ENCODE measurements at regions of chr1 and their contacts with region 1.

Region 1: GRCh38 chr1:234610348-234611152 is 572 bp upstream of the IRF2BP2 start:
- DNase-seq: peak; percentile 84
- ATAC-seq: peak; percentile 45
- H3K4me3 Mint-ChIP-seq: peak overlapping the region; percentile 90
- H3K27ac Mint-ChIP-seq: peak overlapping the region; percentile 95
- H3K4me1 Mint-ChIP-seq: peaks cover 56% of the 10 kb centered on the region
- H3K27me3 Mint-ChIP-seq: no peaks in the 10 kb centered on the region
- CTCF ChIP-seq: no peak

Region 2: GRCh38 chr1:234639961-234640360 is 29.4 kb after region 1 on chr1:
- CTCF ChIA-PET with region 1: no interaction called
- POLR2A ChIA-PET with region 1: no interaction called
- intact Hi-C with region 1: loop called (anchors 2 kb)
- DNase-seq: no peak
- ATAC-seq: no peak
- H3K4me3 Mint-ChIP-seq: no peak overlapping the region
- H3K27ac Mint-ChIP-seq: no peak overlapping the region
- H3K4me1 Mint-ChIP-seq: no peaks in the 10 kb centered on the region
- H3K27me3 Mint-ChIP-seq: no peaks in the 10 kb centered on the region
- CTCF ChIP-seq: no peak

Region 3: DNA sequence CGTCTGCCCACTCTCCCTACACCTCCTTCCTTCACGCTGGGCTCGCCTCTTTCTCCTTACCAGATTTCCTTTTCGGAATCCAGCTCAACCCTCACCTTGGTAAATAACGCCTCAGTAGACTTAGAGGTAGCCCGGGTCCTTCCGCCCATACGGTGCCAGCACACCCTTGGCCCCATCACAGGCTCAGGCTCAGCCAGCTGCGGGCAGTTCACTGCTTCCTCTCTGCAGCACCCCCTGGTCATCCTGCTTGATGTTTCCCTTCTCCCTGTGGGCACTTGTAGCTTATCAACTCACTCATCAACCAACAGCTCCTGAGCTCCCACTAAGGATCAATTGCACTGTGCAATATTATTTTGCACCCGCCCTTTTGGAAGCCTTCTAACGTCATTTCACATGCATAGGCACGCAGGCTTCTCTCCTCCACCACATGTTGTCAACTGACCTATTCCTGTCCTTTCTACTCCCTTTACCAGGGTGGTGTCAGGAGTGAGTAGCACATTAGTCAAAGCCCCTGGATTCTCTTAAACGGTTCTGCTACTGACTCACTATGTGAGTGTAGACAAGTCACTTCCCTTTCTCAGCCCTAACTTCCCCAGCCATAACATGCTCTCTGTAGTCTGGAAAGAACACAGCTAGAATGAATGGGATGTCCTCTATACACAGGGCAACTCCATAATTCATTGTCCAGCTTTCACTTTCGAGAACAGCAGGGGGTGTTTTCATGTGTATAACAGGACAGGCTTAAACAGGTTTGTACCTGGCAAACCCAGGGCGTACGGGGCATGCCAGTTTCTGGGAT is 46.5 kb after region 1 on chr1:
- CTCF ChIA-PET with region 1: no interaction called
- POLR2A ChIA-PET with region 1: no interaction called
- intact Hi-C with region 1: no loop called
- DNase-seq: no peak
- ATAC-seq: peak; percentile 50
- H3K4me3 Mint-ChIP-seq: no peak overlapping the region
- H3K27ac Mint-ChIP-seq: no peak overlapping the region
- H3K4me1 Mint-ChIP-seq: peaks cover 9% of the 10 kb centered on the region
- H3K27me3 Mint-ChIP-seq: no peaks in the 10 kb centered on the region
- CTCF ChIP-seq: no peak

Region 4: DNA sequence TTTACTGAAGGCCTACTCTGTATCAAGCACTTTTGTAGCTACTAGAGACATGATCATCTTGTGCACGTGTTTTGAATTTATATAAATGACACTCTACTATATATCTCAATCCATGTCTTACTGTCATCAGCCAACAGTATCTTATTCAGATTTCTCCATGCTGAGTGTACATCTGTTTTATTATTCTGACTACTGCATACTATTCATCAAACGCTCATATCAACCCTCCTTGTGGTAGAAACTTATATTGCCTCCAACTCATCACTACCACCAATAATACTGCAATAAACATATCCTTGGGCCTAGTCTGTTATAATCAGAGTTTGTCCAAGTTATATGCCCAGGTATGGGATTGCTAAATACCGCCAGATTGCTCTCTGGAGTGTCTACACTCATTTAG is 81.0 kb after region 1 on chr1:
- CTCF ChIA-PET with region 1: no interaction called
- POLR2A ChIA-PET with region 1: no interaction called
- intact Hi-C with region 1: no loop called
- DNase-seq: no peak
- ATAC-seq: no peak
- H3K4me3 Mint-ChIP-seq: no peak overlapping the region
- H3K27ac Mint-ChIP-seq: no peak overlapping the region
- H3K4me1 Mint-ChIP-seq: peaks cover 8% of the 10 kb centered on the region
- H3K27me3 Mint-ChIP-seq: no peaks in the 10 kb centered on the region
- CTCF ChIP-seq: no peak

Region 5: GRCh38 chr1:234772345-234773147 is 162.0 kb after region 1 on chr1:
- CTCF ChIA-PET with region 1: interaction called, 12 read pairs
- POLR2A ChIA-PET with region 1: interaction called, 86 read pairs
- intact Hi-C with region 1: loop called (anchors 1 kb)
- DNase-seq: peak; percentile 66
- ATAC-seq: peak; percentile 81
- H3K4me3 Mint-ChIP-seq: peak overlapping the region; percentile 77
- H3K27ac Mint-ChIP-seq: peak overlapping the region; percentile 96
- H3K4me1 Mint-ChIP-seq: peaks cover 57% of the 10 kb centered on the region
- H3K27me3 Mint-ChIP-seq: no peaks in the 10 kb centered on the region
- CTCF ChIP-seq: no peak

Region 6: DNA sequence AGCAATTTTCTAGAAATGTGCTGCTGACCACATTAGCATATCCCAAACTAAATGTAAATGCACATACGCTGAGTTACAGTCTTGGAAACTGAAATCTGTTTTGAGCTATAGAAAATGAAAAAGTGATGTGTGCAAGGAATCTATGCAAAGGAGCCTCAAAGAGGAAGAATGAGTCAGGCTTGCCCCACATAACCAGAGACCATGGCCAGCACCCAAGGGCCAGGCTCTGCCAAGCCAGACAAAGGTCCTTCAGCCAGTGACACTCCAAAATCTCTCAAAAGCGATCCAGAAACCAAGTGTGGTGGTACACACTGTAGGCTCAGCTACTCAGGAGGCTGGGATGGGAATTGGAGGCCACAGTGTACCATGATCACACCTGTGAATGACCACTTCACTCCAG is 322.9 kb after region 1 on chr1:
- CTCF ChIA-PET with region 1: interaction called, 4 read pairs
- POLR2A ChIA-PET with region 1: interaction called, 11 read pairs
- intact Hi-C with region 1: no loop called
- DNase-seq: no peak
- ATAC-seq: peak; percentile 86
- H3K4me3 Mint-ChIP-seq: peak overlapping the region; percentile 50
- H3K27ac Mint-ChIP-seq: peak overlapping the region; percentile 70
- H3K4me1 Mint-ChIP-seq: peaks cover 21% of the 10 kb centered on the region
- H3K27me3 Mint-ChIP-seq: no peaks in the 10 kb centered on the region
- CTCF ChIP-seq: no peak

Region 7: DNA sequence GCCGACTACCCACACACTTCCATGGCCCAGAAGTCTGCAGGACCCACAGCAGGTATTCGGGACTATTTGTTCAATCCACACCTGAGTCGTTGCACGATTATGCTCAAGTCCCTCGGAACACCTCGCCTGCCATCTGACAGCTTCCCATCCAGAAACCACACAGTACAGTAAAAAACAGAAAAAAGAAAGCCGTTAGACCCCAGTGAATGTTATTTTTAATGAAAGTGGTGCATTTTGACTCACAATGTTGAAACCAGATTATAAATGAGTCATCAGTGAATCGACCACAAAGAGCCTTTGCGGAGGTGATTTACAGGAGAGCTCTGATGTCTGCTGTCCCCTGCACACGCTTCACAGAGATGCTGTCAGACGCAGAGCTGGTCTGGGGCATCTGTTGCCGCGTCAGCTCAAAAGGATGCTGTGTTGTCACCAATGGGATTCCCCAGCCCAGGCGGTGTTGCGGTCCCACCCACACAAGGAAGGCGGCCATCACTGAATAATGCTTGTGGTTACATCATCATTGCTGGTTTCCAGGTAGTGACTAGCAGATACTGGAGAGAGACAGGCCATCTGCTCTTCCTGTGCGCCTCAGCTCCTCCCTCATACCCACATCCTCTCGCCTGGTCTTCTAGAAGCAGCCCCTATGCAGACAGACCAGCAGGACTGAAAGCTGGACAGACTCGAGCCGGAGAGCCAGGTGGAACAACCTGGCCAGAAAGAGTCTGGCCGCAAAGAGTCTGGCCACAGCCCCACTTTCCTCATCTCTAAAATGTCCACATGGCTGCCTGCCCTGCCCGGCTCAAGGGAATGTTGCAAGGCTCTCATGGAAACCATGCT is 401.3 kb after region 1 on chr1:
- CTCF ChIA-PET with region 1: interaction called, 3 read pairs
- POLR2A ChIA-PET with region 1: interaction called, 142 read pairs
- intact Hi-C with region 1: loop called (anchors 1 kb)
- DNase-seq: peak; percentile 79
- ATAC-seq: peak; percentile 77
- H3K4me3 Mint-ChIP-seq: peak overlapping the region; percentile 47
- H3K27ac Mint-ChIP-seq: peak overlapping the region; percentile 99
- H3K4me1 Mint-ChIP-seq: peaks cover 94% of the 10 kb centered on the region
- H3K27me3 Mint-ChIP-seq: no peaks in the 10 kb centered on the region
- CTCF ChIP-seq: no peak

Region 8: DNA sequence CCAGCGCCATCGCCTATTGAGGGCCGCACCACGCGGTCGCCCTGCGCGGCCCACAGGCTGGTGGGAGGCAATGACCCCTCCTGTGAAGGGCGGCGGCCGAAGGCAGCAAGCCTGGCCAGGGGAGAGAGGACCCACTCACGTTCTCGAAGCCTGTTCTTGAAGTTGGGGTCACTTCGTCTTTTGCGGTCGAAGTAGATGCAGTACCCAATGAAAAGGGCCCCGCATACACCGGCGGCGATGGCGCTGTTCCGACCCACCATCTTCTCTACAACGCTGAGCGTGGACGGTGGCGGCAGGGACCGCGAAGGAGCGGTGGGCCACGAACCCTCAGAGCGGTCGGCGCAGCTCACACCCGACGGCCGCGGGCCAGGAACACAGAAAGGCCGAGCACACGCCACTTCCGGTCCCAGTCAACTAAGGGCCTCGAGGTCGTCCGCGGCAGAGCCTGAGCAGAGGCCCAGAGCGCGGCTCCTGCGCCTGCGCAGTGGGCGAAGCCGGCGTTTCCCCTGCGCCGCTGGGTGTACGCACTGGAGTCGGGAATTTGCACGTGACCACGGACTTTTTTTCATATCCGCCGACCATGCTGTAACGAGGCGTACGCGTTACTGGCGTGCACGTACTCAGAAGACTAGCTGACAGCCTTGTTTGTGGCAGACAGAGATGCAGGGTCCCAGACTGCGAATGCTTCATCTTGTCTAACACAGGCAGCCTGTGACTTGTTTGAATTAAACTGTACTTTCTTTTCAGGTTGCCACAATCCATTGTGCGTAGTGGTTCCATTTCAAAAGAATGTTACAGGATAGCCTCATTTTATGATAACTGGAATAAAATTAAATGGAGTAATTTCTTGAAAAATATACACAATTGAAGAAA is 518.1 kb after region 1 on chr1 and contains the start of gene TOMM20:
- CTCF ChIA-PET with region 1: no interaction called
- POLR2A ChIA-PET with region 1: no interaction called
- intact Hi-C with region 1: loop called (anchors 1 kb)
- DNase-seq: peak; percentile 91
- ATAC-seq: peak; percentile 93
- H3K4me3 Mint-ChIP-seq: peak within 1 kb of the TSS; percentile 97
- H3K27ac Mint-ChIP-seq: peak within 1 kb of the TSS; percentile 93
- H3K4me1 Mint-ChIP-seq: peaks cover 41% of the 10 kb centered on the region
- H3K27me3 Mint-ChIP-seq: no peaks in the 10 kb centered on the region
- CTCF ChIP-seq: no peak
- total RNA-seq, gene TOMM20: 80.6 and 82.7 TPM in 2 replicates